BJ (cell line): ENCODE measurements at regions of chr12 and their contacts with region 1.

Region 1: GRCh38 chr12:8813572-8814357 is 8.7 kb upstream of the A2ML1 start:
- DNase-seq: no peak
- H3K4me3 ChIP-seq: no peak overlapping the region
- H3K27me3 ChIP-seq: no peaks in the 10 kb centered on the region
- CTCF ChIP-seq: no peak

Region 2: GRCh38 chr12:7638760-7639555 is 1174.8 kb before region 1 on chr12:
- CTCF ChIA-PET with region 1: no interaction called
- POLR2A ChIA-PET with region 1: no interaction called
- DNase-seq: peak; percentile 17
- H3K4me3 ChIP-seq: no peak overlapping the region
- H3K27me3 ChIP-seq: no peaks in the 10 kb centered on the region
- CTCF ChIP-seq: peak; percentile 68

Region 3: DNA sequence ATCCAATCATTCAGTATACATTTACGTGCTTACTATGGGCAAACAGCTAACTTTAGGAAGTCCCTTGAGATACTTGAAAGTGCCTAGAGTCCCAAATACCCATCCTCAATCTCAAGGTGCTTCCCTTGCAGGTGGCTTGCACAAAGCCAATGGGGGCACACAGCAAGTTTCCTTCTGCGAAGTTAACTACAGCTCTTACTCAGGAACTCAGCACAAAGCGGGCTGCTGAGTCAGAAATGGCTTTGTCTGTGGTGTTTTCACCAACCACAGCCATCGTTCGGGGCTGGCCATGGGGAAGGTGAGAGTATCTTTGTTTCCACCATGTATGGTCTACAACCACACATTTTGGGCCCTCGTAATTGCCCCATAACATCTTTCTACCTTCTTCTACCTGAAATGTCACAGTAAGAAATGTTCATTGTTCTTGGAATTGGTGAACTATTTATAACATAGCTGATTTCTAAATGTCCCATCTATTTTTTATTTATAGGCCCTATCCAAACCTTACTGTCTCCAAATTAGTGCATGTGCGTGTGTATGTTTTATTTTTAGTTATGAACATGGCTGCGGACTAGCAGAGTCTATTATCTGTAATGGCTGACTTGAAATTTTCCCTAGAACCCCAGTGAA is 165.1 kb before region 1 on chr12:
- CTCF ChIA-PET with region 1: no interaction called
- POLR2A ChIA-PET with region 1: interaction called, 12 read pairs
- DNase-seq: no peak
- H3K4me3 ChIP-seq: no peak overlapping the region
- H3K27me3 ChIP-seq: no peaks in the 10 kb centered on the region
- CTCF ChIP-seq: no peak